Psoas muscle (tissue), 8 donors: ENCODE measurements at regions of chr15 and their contacts with region 1.

Region 1: GRCh38 chr15:89017370-89018066 is 70.7 kb upstream of the ABHD2 start:
- DNase-seq: peak; percentile 85 to 91
- ATAC-seq: peak; percentile 64 to 79 (median 69)
- H3K4me3 ChIP-seq: peak overlapping the region; percentile 54
- H3K27ac ChIP-seq: peak overlapping the region; percentile 62
- H3K4me1 ChIP-seq: peaks cover 29% of the 10 kb centered on the region
- H3K27me3 ChIP-seq: no peaks in the 10 kb centered on the region
- CTCF ChIP-seq: peak; percentile 77

Region 2: DNA sequence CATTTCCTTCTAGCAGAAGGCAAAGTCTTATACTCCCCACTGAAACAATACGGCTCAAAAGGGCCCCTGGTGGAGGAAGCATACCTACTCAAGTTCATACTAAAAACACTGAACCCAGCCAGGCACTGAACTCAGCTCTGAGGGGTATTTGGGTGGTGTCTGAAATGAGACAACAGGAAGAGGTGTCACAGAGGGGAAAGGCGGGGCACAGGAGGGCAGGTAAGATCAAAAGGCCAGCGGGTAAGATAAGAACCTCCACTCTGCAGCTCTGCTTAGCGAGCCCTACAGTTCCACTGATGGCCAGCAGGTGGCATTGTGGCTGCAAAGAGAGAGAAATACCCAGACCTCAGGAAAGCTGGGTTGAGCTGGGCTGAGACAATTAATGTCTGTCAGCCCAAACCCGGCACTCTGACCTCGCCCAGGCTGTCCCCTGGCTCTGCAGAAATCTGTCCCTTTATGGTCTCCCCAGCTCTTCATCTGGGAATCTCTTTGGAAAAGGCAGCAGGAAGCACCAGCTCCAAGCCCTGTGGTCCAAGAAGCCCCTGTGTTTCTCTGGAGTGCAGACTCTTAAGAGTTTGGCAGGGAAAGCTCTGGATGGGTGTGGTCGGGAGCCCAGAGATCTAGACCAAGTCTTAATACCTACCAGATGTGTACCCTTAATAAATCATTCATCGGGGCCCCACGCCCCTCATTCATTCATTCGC is 112.7 kb before region 1 on chr15:
- intact Hi-C with region 1: loop called (anchors 2 to 5 kb)
- DNase-seq: peak; percentile 81 to 91
- ATAC-seq: peak; percentile 51 to 83 (median 74)
- H3K4me3 ChIP-seq: no peak overlapping the region
- H3K27ac ChIP-seq: peak overlapping the region; percentile 48
- H3K4me1 ChIP-seq: peaks cover 81% of the 10 kb centered on the region
- H3K27me3 ChIP-seq: no peaks in the 10 kb centered on the region
- CTCF ChIP-seq: peak; percentile 100

Region 3: DNA sequence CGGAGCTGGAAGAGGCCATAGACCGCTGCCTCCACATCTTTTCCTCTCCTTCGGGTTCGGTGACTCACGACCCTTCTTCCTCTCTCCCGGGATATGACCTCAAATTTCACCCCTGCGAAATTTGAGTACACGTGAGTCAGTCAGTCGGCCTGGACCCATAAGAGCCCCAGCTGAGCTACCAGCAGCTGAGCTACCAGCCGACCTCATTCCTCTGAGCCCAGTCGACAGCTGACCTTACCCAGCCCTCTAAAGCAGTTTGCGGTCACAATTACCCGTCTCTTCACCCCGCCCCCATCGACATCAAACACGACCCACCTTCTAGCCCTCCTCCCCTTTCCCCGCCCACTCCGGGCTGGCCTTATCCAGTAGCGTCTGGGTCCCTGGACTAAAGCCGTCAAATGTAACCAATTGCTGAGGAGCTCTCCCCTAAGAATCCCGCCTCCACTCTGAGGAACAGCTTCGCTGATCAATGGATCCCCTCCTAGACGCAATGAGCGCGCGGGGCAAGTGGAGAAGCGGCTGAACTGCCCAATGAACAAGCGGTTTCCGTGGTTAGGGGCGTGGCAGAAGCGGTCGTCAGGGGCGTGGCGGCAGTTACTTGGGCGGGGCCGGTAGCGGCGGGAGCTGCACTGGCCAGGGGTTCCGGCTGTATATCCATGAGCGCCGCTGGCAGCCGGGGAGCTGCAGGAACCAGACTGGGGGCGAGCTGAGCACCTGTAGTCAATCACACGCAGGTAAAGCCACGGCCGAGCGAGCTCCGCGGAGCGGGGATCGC is 70.5 kb after region 1 on chr15 and contains the start of gene ABHD2:
- intact Hi-C with region 1: no loop called
- DNase-seq: peak; percentile 99
- ATAC-seq: peak; percentile 84 to 86 (median 85)
- H3K4me3 ChIP-seq: peak within 1 kb of the TSS; percentile 97
- H3K27ac ChIP-seq: peak within 1 kb of the TSS; percentile 98
- H3K4me1 ChIP-seq: peaks cover 65% of the 10 kb centered on the region
- H3K27me3 ChIP-seq: no peaks in the 10 kb centered on the region
- CTCF ChIP-seq: no peak
- total RNA-seq, gene ABHD2: 66.1 to 215 (median 157) TPM

Region 4: DNA sequence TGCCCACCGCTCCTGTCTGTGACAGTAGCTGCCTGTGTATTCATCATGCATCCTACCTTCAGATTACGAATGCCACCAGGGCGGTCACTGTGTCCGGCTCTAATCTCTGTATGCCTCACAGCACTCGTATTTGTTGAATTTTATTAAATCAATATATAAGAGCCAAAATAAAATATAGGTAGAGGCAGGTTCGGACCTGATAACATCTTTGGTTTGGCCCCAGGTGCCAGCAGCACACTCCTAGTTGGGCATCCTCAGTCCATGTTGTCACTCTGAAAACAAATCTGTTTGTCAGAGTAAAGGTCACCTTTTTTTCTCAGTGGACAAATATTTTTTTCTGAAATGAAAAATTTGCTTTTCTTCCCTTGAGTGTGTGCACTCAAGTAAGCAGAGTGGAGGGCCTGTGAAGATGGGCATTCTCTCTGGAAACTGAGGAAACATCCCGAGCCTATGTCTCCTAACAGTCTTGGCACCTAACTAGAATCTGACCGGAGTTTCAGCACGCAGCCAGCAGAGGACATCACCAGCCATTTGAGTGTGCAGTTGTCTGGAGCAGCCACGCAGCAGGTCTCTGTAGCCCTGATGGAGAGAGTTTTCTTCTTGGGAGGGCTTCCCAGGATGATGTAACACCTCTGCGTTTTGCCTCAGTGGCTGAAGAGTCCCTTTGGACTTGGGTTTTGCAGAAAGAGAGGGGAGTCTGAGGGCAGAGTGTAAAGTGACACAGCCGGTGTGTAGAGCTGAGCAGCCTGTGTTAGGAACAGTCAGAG is 122.1 kb after region 1 on chr15:
- intact Hi-C with region 1: no loop called
- DNase-seq: peak in 1 of 2 donors; percentile 70
- ATAC-seq: peak in 3 of 4 donors; percentile 24 to 39 (median 31)
- H3K4me3 ChIP-seq: no peak overlapping the region
- H3K27ac ChIP-seq: peak overlapping the region; percentile 76
- H3K4me1 ChIP-seq: peaks cover 84% of the 10 kb centered on the region
- H3K27me3 ChIP-seq: no peaks in the 10 kb centered on the region
- CTCF ChIP-seq: peak; percentile 12